Activated naive CD4-positive, alpha-beta T cell treated with anti-CD3 and anti-CD28 coated beads for 36 hours (primary cell): ENCODE measurements at regions of chr12 and their contacts with region 1.

Region 1: DNA sequence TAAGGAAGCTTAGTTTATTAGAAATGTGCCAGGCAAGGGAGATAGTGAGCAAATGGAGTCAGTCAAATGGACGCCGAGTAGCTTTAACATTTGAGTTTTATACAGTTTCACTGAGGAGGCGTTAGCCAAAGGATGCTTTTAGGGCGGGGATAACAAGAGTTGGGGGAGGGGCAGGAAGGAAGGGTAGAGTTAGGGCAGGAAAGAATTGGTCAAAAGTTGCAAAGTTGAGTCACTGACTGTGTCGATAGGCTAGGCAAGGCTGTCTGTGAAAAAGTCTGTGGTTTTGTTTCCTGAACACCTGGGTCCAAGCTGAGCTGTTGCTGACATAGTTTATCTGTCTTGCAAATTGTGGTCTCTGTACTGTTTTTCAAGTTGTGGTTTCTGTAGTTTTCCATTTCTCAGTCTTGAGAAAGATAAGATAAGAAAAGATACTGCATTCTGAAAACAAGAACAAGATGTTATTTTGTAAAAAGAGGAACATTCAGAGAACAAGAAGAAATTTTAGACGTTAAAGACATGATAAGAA is 62.6 kb upstream of the RESF1 start:
- DNase-seq: peak; percentile 96
- H3K4me3 Mint-ChIP-seq: peak overlapping the region; percentile 55
- H3K27ac Mint-ChIP-seq: peak overlapping the region; percentile 99
- H3K4me1 Mint-ChIP-seq: peaks cover 58% of the 10 kb centered on the region
- H3K27me3 Mint-ChIP-seq: no peaks in the 10 kb centered on the region

Region 2: DNA sequence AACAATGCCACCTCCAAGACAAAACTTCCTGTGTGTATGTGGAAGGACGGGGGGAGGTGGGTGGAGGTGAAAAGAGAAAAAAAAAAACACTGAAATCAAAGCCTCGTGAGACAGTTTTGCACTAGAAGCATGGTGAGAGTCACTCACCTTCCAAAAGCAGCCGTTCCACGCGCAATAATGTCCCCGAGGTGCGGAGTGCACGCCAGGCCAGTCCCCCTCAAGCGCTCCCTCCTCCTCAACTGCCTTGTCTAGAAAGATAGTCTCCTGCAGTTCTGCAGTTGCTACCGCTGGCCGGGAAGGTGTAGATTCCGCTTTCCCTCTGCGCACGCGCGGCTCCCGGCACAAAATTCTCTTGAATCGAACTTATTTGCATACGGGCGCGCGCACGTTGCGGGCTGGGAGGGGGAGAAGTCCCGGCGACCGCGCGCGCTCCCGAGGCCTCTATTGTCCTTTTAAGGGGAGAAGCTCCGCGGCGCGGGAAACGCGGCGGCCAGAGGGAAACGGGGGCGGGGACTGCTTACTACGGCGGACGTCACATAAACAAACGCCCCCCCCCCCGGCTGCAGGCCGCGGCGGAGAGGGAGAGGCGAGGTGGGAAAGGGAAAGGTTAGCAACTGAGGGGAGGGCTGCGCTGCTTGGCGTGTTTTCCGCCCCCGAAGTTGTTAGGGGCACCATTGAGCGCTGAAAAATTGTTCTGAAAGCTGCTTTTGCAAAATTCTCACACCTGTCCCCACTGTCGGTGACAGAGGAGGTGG is 570.5 kb before region 1 on chr12 and contains the start of gene SINHCAF:
- CTCF ChIA-PET with region 1: no interaction called
- intact Hi-C with region 1: loop called (anchors 1 kb)
- DNase-seq: peak; percentile 99
- H3K4me3 Mint-ChIP-seq: peak within 1 kb of the TSS; percentile 96
- H3K27ac Mint-ChIP-seq: peak within 1 kb of the TSS; percentile 99
- H3K4me1 Mint-ChIP-seq: peaks cover 20% of the 10 kb centered on the region
- H3K27me3 Mint-ChIP-seq: no peaks in the 10 kb centered on the region
- total RNA-seq, gene SINHCAF: 158 to 169 TPM

Region 3: GRCh38 chr12:31728917-31729640 is 167.5 kb before region 1 on chr12 and contains the start of gene AMN1:
- CTCF ChIA-PET with region 1: no interaction called
- intact Hi-C with region 1: loop called (anchors 1 kb)
- DNase-seq: peak; percentile 99
- H3K4me3 Mint-ChIP-seq: peak within 1 kb of the TSS; percentile 95
- H3K27ac Mint-ChIP-seq: peak within 1 kb of the TSS; percentile 97
- H3K4me1 Mint-ChIP-seq: peaks cover 38% of the 10 kb centered on the region
- H3K27me3 Mint-ChIP-seq: no peaks in the 10 kb centered on the region
- total RNA-seq, gene AMN1: 6.6 to 8.0 TPM

Region 4: GRCh38 chr12:31832740-31833729 is 63.5 kb before region 1 on chr12:
- CTCF ChIA-PET with region 1: no interaction called
- intact Hi-C with region 1: loop called (anchors 1 kb)
- DNase-seq: peak; percentile 63
- H3K4me3 Mint-ChIP-seq: no peak overlapping the region
- H3K27ac Mint-ChIP-seq: peak overlapping the region; percentile 89
- H3K4me1 Mint-ChIP-seq: peaks cover 46% of the 10 kb centered on the region
- H3K27me3 Mint-ChIP-seq: no peaks in the 10 kb centered on the region

Region 5: GRCh38 chr12:31928246-31929026 is 31.9 kb after region 1 on chr12:
- CTCF ChIA-PET with region 1: no interaction called
- intact Hi-C with region 1: loop called (anchors 1 kb)
- DNase-seq: peak; percentile 49
- H3K4me3 Mint-ChIP-seq: peak overlapping the region; percentile 78
- H3K27ac Mint-ChIP-seq: peak overlapping the region; percentile 97
- H3K4me1 Mint-ChIP-seq: peaks cover 38% of the 10 kb centered on the region
- H3K27me3 Mint-ChIP-seq: no peaks in the 10 kb centered on the region

Region 6: GRCh38 chr12:32139064-32139421 is 242.5 kb after region 1 on chr12:
- CTCF ChIA-PET with region 1: no interaction called
- intact Hi-C with region 1: loop called (anchors 10 kb)
- DNase-seq: peak; percentile 74
- H3K4me3 Mint-ChIP-seq: peak overlapping the region; percentile 71
- H3K27ac Mint-ChIP-seq: no peak overlapping the region
- H3K4me1 Mint-ChIP-seq: peaks cover 24% of the 10 kb centered on the region
- H3K27me3 Mint-ChIP-seq: peaks cover 2% of the 10 kb centered on the region

Region 7: GRCh38 chr12:32413412-32413811 is 516.8 kb after region 1 on chr12:
- CTCF ChIA-PET with region 1: no interaction called
- intact Hi-C with region 1: no loop called
- DNase-seq: no peak
- H3K4me3 Mint-ChIP-seq: no peak overlapping the region
- H3K27ac Mint-ChIP-seq: no peak overlapping the region
- H3K4me1 Mint-ChIP-seq: no peaks in the 10 kb centered on the region
- H3K27me3 Mint-ChIP-seq: peaks cover 6% of the 10 kb centered on the region